Naive thymus-derived CD4-positive, alpha-beta T cell (primary cell): ENCODE measurements at regions of chr16 and their contacts with region 1.

Region 1: GRCh38 chr16:11715246-11715947 is 27.3 kb downstream of the TXNDC11 start:
- DNase-seq: no peak
- ATAC-seq: no peak
- H3K4me3 ChIP-seq: no peak overlapping the region
- H3K4me3 Mint-ChIP-seq: no peak overlapping the region
- H3K27ac ChIP-seq: no peak overlapping the region
- H3K27ac Mint-ChIP-seq: peak overlapping the region in 5 of 9 donors; percentile 6 to 79 (median 48)
- H3K4me1 ChIP-seq: peaks cover 0 to 3% of the 10 kb centered on the region in 2 donors
- H3K4me1 Mint-ChIP-seq: peaks cover 4 to 38% (median 22%) of the 10 kb centered on the region in 7 donors
- H3K27me3 ChIP-seq: no peaks in the 10 kb centered on the region
- H3K27me3 Mint-ChIP-seq: no peaks in the 10 kb centered on the region

Region 2: DNA sequence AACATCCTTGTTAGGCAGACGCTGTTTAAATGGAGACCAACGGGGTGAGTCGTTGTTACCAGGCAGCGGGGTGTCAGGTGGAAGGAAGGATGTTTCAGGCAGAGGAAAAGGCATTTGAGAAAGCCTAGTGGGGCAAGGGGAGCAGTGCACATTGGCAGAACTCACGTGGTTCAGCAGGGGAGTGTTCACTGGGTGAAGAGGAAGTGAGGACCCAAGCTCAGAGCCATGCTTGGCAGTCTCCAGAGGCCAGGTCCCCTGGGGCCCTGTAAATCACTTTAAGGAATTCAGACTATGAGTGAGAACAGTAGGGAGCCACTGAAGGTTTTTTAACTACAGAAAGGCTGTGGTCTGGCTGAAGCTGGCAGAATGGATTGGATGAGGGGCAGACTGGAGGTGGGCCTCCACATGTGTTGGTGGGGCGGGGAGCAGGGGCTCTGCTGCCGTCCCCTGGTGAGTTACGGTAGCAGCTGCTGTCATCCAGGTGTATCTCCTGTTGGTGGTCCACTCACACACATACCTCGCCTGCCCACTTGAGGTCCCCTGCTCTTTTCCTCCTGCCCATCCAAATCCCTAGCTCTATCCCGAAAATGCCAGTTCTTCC is 765.9 kb before region 1 on chr16:
- CTCF ChIA-PET with region 1: no interaction called
- POLR2A ChIA-PET with region 1: no interaction called
- intact Hi-C with region 1: loop called (anchors 2 to 5 kb)
- DNase-seq: peak in 7 of 9 donors; percentile 41 to 69 (median 64)
- ATAC-seq: peak; percentile 83
- H3K4me3 ChIP-seq: no peak overlapping the region
- H3K4me3 Mint-ChIP-seq: peak overlapping the region in 9 of 10 donors; percentile 41 to 73 (median 60)
- H3K27ac ChIP-seq: peak overlapping the region; percentile 52
- H3K27ac Mint-ChIP-seq: peak overlapping the region; percentile 45 to 90 (median 76)
- H3K4me1 ChIP-seq: peaks cover 15 to 40% of the 10 kb centered on the region in 2 donors
- H3K4me1 Mint-ChIP-seq: peaks cover 31 to 78% (median 64%) of the 10 kb centered on the region in 7 donors
- H3K27me3 ChIP-seq: no peaks in the 10 kb centered on the region
- H3K27me3 Mint-ChIP-seq: no peaks in the 10 kb centered on the region

Region 3: DNA sequence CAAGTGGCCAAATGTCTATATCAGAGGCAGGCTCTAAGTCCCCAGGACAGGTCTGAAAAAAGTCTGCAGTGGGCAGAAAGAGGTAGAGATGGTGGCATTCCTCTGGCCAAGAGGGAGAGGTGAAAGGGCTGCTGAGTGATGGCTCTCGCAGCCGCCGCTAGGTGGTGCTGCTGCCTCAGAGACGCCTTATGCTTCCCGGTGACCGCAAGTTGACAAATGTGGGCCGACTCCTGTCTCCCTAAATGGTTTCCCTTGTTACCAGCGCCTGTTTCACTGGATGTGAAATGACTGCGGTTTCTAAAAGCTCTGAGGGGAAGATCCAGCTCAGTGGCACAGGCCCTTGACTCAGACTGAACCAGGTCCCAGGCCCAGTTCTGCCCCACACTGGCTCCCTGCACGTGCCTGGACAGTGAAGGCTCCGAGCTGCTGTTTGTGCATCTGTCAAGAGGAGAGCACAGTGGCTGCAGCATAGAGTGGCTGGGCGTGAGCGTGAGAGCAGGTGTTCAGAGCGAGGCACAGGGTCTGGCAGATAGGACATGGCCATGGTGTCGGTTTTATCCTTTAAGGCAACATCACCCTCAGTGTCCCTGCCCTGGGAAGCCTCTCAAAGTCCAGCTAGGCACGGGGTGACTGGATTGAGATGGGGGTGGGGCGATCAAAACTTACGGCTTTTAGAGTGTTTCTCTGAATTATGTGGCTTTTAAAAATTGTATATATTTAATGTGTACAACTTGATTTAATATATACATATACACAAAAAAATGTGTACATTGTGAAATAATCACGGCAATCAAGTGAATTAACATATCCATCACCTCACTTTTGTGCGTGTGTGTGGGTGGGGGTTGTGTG is 751.1 kb before region 1 on chr16:
- CTCF ChIA-PET with region 1: interaction called, 10 read pairs
- POLR2A ChIA-PET with region 1: no interaction called
- intact Hi-C with region 1: loop called in 1 of 2 experiments (anchors 1 kb)
- DNase-seq: peak; percentile 55 to 84 (median 69)
- ATAC-seq: peak; percentile 81
- H3K4me3 ChIP-seq: peak overlapping the region; percentile 3
- H3K4me3 Mint-ChIP-seq: peak overlapping the region in 6 of 10 donors; percentile 4 to 83 (median 52)
- H3K27ac ChIP-seq: no peak overlapping the region
- H3K27ac Mint-ChIP-seq: peak overlapping the region in 6 of 9 donors; percentile 47 to 91 (median 72)
- H3K4me1 ChIP-seq: peaks cover 11 to 18% of the 10 kb centered on the region in 2 donors
- H3K4me1 Mint-ChIP-seq: peaks cover 15 to 62% (median 28%) of the 10 kb centered on the region in 7 donors
- H3K27me3 ChIP-seq: no peaks in the 10 kb centered on the region
- H3K27me3 Mint-ChIP-seq: no peaks in the 10 kb centered on the region

Region 4: DNA sequence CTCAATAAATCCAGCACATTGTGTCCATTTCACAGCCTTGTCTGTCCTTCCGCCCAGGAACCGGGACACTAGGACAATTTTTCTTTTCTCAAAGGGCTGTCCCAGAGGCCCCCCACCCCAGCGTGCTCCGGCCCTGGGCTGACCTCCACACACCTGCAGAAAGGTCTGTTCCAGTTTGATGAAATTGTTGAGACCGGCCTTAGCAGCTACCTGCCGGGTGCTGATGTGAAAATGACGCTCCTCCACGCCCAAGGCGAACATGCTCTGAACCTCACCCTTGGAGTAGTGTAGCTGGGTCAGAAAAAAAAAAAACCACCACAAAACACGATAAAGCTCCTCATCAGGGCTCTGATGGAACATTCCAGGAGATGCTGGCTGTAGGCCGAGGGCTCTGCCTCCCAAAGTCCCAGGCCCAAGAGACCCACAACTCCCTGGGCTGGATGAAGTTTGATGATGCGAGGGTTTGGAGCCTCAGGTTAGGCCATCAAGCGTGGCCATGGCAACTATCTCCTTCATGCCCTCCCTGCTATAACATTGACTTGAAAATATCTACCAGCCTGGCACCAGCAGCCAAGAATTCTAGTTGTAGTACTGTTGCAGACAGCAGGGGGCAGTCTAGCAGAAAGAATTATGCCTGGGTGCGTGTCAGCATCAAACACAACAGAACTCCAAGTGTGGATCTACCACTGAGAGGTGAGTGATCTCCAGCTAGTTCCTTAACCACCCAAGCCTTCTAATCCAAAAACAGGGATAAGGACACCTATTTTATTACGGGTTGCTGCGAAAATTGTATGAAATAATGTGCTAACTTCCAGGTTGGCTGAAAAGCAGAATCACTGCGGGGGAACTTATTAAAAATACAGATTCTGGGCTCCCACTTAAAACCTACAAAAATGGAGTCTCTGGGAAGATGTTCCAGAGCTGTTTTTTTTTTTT is 308.1 kb before region 1 on chr16:
- CTCF ChIA-PET with region 1: interaction called, 13 read pairs
- POLR2A ChIA-PET with region 1: no interaction called
- intact Hi-C with region 1: loop called in 1 of 2 experiments (anchors 1 kb)
- DNase-seq: peak; percentile 44 to 78 (median 66)
- ATAC-seq: peak; percentile 85
- H3K4me3 ChIP-seq: no peak overlapping the region
- H3K4me3 Mint-ChIP-seq: no peak overlapping the region
- H3K27ac ChIP-seq: no peak overlapping the region
- H3K27ac Mint-ChIP-seq: peak overlapping the region in 2 of 9 donors; percentile 16 to 72
- H3K4me1 ChIP-seq: no peaks in the 10 kb centered on the region
- H3K4me1 Mint-ChIP-seq: peaks cover 0 to 5% (median 4%) of the 10 kb centered on the region in 7 donors
- H3K27me3 ChIP-seq: no peaks in the 10 kb centered on the region
- H3K27me3 Mint-ChIP-seq: no peaks in the 10 kb centered on the region

Region 5: GRCh38 chr16:11586856-11587642 is 128.3 kb before region 1 on chr16 and contains the start of gene LITAF:
- CTCF ChIA-PET with region 1: interaction called, 3 read pairs
- POLR2A ChIA-PET with region 1: no interaction called
- intact Hi-C with region 1: loop called in 1 of 2 experiments (anchors 2 kb)
- DNase-seq: peak in 8 of 9 donors; percentile 52 to 75 (median 57)
- ATAC-seq: peak; percentile 71
- H3K4me3 ChIP-seq: peak within 1 kb of the TSS; percentile 88
- H3K4me3 Mint-ChIP-seq: peak within 1 kb of the TSS; percentile 91 to 100 (median 96)
- H3K27ac ChIP-seq: peak within 1 kb of the TSS; percentile 94
- H3K27ac Mint-ChIP-seq: peak within 1 kb of the TSS; percentile 90 to 99 (median 97)
- H3K4me1 ChIP-seq: peaks cover 32 to 38% of the 10 kb centered on the region in 2 donors
- H3K4me1 Mint-ChIP-seq: peaks cover 29 to 45% (median 37%) of the 10 kb centered on the region in 7 donors
- H3K27me3 ChIP-seq: no peaks in the 10 kb centered on the region
- H3K27me3 Mint-ChIP-seq: peaks cover 0 to 7% (median 0%) of the 10 kb centered on the region in 5 donors
- total RNA-seq, gene LITAF: 126 to 278 (median 208) TPM

Region 6: DNA sequence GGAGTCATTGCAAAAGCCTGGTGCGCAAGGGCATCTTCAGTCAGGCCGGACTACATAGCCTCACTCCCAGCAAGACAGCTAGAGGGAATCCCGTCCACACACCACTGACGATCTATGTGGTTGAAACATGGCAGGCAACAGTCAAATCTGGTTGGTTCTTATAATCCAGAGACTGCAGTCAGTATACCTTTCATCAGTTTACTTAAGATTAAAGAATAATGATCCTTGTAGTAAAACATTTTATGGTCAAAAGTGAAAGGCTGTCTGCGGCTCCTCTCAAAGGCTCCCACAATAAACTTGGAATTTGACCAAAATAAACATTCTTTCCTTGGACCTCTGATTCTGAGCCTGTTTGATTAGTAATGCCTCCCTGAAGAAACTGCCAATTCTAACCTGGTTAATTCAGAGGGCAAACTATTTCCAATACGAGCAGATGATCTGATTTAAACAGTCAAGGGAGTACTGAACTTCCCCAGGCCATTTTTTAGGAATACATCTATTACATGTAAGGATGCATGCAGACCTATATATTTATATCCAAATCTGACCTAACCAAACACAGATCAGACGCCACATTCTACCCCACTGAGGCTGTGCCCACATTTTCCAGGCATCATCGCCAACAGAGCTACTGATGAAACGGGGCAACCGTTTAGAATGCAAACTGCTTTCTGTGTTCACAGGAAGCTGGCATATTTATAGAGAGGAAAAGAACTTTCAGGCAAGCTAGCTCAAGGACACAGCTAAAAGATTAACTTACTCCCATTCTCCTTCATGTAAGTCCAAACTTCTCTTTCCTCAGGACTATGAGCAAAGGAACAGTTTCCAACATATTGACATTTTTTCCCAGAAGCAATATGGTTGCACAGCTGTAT is 42.5 kb after region 1 on chr16:
- CTCF ChIA-PET with region 1: no interaction called
- POLR2A ChIA-PET with region 1: no interaction called
- intact Hi-C with region 1: no loop called
- DNase-seq: no peak
- ATAC-seq: no peak
- H3K4me3 ChIP-seq: no peak overlapping the region
- H3K4me3 Mint-ChIP-seq: no peak overlapping the region
- H3K27ac ChIP-seq: no peak overlapping the region
- H3K27ac Mint-ChIP-seq: peak overlapping the region in 4 of 9 donors; percentile 14 to 85 (median 58)
- H3K4me1 ChIP-seq: no peaks in the 10 kb centered on the region
- H3K4me1 Mint-ChIP-seq: peaks cover 0 to 2% (median 0%) of the 10 kb centered on the region in 7 donors
- H3K27me3 ChIP-seq: no peaks in the 10 kb centered on the region
- H3K27me3 Mint-ChIP-seq: no peaks in the 10 kb centered on the region